Heart right ventricle (tissue), 16 donors: ENCODE measurements at regions of chr9 and their contacts with region 1.

Region 1: GRCh38 chr9:20728493-20729220 is 44.6 kb downstream of the FOCAD start:
- DNase-seq: no peak
- ATAC-seq: peak in 2 of 8 donors; percentile 28 to 68
- H3K4me3 ChIP-seq: no peak overlapping the region
- H3K27ac ChIP-seq: no peak overlapping the region
- H3K4me1 ChIP-seq: peaks cover 5 to 30% (median 11%) of the 10 kb centered on the region in 9 donors
- H3K27me3 ChIP-seq: no peaks in the 10 kb centered on the region
- CTCF ChIP-seq: no peak

Region 2: GRCh38 chr9:20292002-20292401 is 436.7 kb before region 1 on chr9:
- intact Hi-C with region 1: no loop called
- DNase-seq: no peak
- ATAC-seq: no peak
- H3K4me3 ChIP-seq: no peak overlapping the region
- H3K27ac ChIP-seq: no peak overlapping the region
- H3K4me1 ChIP-seq: peaks cover 0 to 6% (median 0%) of the 10 kb centered on the region in 9 donors
- H3K27me3 ChIP-seq: no peaks in the 10 kb centered on the region
- CTCF ChIP-seq: no peak

Region 3: GRCh38 chr9:20649381-20649780 is 79.3 kb before region 1 on chr9:
- intact Hi-C with region 1: loop called in 1 of 10 experiments (anchors 2 kb)
- DNase-seq: no peak
- ATAC-seq: no peak
- H3K4me3 ChIP-seq: no peak overlapping the region
- H3K27ac ChIP-seq: no peak overlapping the region
- H3K4me1 ChIP-seq: no peaks in the 10 kb centered on the region
- H3K27me3 ChIP-seq: no peaks in the 10 kb centered on the region
- CTCF ChIP-seq: no peak

Region 4: DNA sequence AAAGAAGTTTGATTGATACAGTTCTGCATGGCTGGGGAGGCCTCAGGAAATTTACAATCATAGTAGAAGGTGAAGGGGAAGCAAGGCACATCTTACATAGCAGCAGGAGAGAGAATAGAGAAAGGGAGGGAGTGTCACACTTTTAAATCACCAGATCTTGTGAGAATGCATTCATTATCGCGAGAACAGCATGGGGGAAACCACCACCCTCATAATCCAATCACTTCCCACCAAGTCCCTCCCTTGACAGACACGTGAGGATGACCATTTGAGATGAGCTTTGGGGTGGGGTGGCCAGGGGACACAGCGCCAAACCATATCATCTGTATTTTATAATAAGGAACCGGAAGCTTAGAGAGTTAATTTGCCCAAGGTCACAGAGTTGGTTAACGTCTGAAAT is 58.3 kb before region 1 on chr9:
- intact Hi-C with region 1: loop called in 1 of 10 experiments (anchors 10 kb)
- DNase-seq: no peak
- ATAC-seq: no peak
- H3K4me3 ChIP-seq: no peak overlapping the region
- H3K27ac ChIP-seq: no peak overlapping the region
- H3K4me1 ChIP-seq: no peaks in the 10 kb centered on the region
- H3K27me3 ChIP-seq: no peaks in the 10 kb centered on the region
- CTCF ChIP-seq: no peak

Region 5: GRCh38 chr9:20702565-20702964 is 26.1 kb before region 1 on chr9:
- intact Hi-C with region 1: loop called in 1 of 10 experiments (anchors 2 kb)
- DNase-seq: no peak
- ATAC-seq: no peak
- H3K4me3 ChIP-seq: no peak overlapping the region
- H3K27ac ChIP-seq: no peak overlapping the region
- H3K4me1 ChIP-seq: peaks cover 5 to 33% (median 14%) of the 10 kb centered on the region in 9 donors
- H3K27me3 ChIP-seq: no peaks in the 10 kb centered on the region
- CTCF ChIP-seq: no peak

Region 6: GRCh38 chr9:21096172-21096900 is 367.7 kb after region 1 on chr9:
- intact Hi-C with region 1: no loop called
- DNase-seq: no peak
- ATAC-seq: peak; percentile 68 to 90 (median 82)
- H3K4me3 ChIP-seq: peak overlapping the region in 9 of 10 donors; percentile 12 to 41 (median 32)
- H3K27ac ChIP-seq: peak overlapping the region in 9 of 10 donors; percentile 30 to 76 (median 58)
- H3K4me1 ChIP-seq: peaks cover 0 to 34% (median 18%) of the 10 kb centered on the region in 9 donors
- H3K27me3 ChIP-seq: no peaks in the 10 kb centered on the region
- CTCF ChIP-seq: no peak